Aorta (tissue), 5 donors: ENCODE measurements at regions of chr11 and their contacts with region 1.

Region 1: GRCh38 chr11:76670485-76671236 is at the start of gene LRRC32:
- DNase-seq: peak; percentile 84 to 91
- ATAC-seq: peak; percentile 72
- H3K4me3 ChIP-seq: peak within 1 kb of the TSS; percentile 57 to 85
- H3K27ac ChIP-seq: peak within 1 kb of the TSS in 1 of 2 donors; percentile 68
- H3K4me1 ChIP-seq: peaks cover 0 to 2% of the 10 kb centered on the region in 2 donors
- H3K27me3 ChIP-seq: no peaks in the 10 kb centered on the region
- total RNA-seq, gene LRRC32: 130 to 174 TPM

Region 2: GRCh38 chr11:76380967-76381719 is 289.5 kb before region 1 on chr11 and contains the starts of genes GVQW3 and THAP12:
- intact Hi-C with region 1: loop called in 1 of 2 experiments (anchors 10 kb)
- DNase-seq: peak; percentile 98 to 99
- ATAC-seq: peak; percentile 99
- H3K4me3 ChIP-seq: peak within 1 kb of the TSS; percentile 71 to 90
- H3K27ac ChIP-seq: no peak within 1 kb of the TSS
- H3K4me1 ChIP-seq: no peaks in the 10 kb centered on the region
- H3K27me3 ChIP-seq: no peaks in the 10 kb centered on the region
- total RNA-seq, gene GVQW3: 1.9 to 3.7 TPM
- total RNA-seq, gene THAP12: 36.7 to 41.0 TPM

Region 3: DNA sequence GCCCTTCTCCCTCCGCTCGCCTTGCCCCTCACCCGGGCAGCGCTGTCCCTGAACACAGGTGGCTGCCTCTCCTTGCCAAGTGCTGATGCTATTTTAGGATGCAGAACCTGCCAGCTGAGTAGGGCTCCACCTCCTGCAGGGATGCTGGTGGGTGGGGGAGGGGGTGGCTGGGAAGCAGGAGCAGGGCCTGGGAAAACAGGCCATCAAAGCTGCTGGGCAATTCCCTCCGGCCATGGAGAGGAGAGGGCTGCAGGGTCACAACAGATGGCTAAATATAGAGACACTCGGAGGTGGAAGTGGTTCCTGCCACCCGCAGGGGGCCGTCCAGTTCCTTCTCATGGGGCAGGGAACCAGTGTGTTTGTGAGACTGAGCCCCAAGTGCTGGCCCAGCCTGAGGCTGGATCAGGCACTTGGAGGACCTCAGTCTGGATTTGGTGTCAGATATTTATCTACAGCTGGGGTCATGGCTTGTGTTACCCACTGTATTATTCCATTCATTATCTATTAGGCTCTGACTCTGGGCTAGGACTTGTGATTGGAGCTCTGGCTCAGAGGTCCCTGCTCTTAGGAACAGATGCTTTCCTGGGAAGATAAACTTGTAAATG is 59.7 kb before region 1 on chr11:
- intact Hi-C with region 1: loop called in 1 of 2 experiments (anchors 5 kb)
- DNase-seq: peak; percentile 64 to 70
- ATAC-seq: no peak
- H3K4me3 ChIP-seq: no peak overlapping the region
- H3K27ac ChIP-seq: peak overlapping the region in 1 of 2 donors; percentile 70
- H3K4me1 ChIP-seq: peaks cover 0 to 5% of the 10 kb centered on the region in 2 donors
- H3K27me3 ChIP-seq: no peaks in the 10 kb centered on the region